PC-9 (cell line): ENCODE measurements at regions of chr3 and their contacts with region 1.

Region 1: DNA sequence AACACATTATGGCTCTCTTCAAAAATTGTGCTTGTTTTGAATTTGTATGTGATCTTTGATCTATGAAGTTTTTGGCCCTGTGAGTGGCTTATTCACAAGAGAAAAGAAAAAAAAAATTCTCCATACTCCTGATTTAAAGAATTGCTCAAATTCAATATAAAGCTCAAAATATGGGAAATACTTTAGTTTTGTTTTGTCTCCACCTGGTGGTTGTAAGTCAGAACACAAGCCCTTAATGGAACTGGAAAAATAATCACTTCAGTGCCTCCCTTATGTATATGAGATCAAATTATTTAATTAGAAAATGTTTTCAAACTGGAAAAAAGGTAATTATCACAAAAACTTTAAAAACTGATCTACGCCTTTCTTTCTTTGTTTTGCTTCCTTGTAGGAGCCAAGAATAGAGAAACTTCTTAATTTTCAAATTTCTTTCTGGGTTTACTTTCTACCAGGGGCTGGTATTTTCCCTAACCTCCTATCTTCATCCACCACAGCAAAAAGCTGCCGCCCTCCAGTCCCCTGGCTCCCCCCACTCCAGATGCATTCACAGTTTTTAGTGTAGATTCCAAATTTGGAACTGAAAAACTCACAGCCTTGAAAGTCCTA is 50.6 kb downstream of the SERP1 start:
- DNase-seq: no peak
- H3K4me3 ChIP-seq: no peak overlapping the region
- H3K27ac ChIP-seq: no peak overlapping the region
- H3K4me1 ChIP-seq: peaks cover 28% of the 10 kb centered on the region
- H3K27me3 ChIP-seq: no peaks in the 10 kb centered on the region
- CTCF ChIP-seq: peak; percentile 82

Region 2: GRCh38 chr3:149771652-149772271 is 723.9 kb before region 1 on chr3:
- CTCF ChIA-PET with region 1: no interaction called
- POLR2A ChIA-PET with region 1: interaction called, 11 read pairs
- intact Hi-C with region 1: no loop called
- DNase-seq: peak in 1 of 2 experiments; percentile 43
- H3K4me3 ChIP-seq: no peak overlapping the region
- H3K27ac ChIP-seq: no peak overlapping the region
- H3K4me1 ChIP-seq: no peaks in the 10 kb centered on the region
- H3K27me3 ChIP-seq: no peaks in the 10 kb centered on the region
- CTCF ChIP-seq: peak; percentile 85

Region 3: GRCh38 chr3:150227839-150228238 is 267.8 kb before region 1 on chr3:
- CTCF ChIA-PET with region 1: interaction called, 5 read pairs
- POLR2A ChIA-PET with region 1: no interaction called
- intact Hi-C with region 1: loop called (anchors 1 kb)
- DNase-seq: peak in 1 of 2 experiments; percentile 65
- H3K4me3 ChIP-seq: no peak overlapping the region
- H3K27ac ChIP-seq: no peak overlapping the region
- H3K4me1 ChIP-seq: no peaks in the 10 kb centered on the region
- H3K27me3 ChIP-seq: no peaks in the 10 kb centered on the region
- CTCF ChIP-seq: peak; percentile 82

Region 4: DNA sequence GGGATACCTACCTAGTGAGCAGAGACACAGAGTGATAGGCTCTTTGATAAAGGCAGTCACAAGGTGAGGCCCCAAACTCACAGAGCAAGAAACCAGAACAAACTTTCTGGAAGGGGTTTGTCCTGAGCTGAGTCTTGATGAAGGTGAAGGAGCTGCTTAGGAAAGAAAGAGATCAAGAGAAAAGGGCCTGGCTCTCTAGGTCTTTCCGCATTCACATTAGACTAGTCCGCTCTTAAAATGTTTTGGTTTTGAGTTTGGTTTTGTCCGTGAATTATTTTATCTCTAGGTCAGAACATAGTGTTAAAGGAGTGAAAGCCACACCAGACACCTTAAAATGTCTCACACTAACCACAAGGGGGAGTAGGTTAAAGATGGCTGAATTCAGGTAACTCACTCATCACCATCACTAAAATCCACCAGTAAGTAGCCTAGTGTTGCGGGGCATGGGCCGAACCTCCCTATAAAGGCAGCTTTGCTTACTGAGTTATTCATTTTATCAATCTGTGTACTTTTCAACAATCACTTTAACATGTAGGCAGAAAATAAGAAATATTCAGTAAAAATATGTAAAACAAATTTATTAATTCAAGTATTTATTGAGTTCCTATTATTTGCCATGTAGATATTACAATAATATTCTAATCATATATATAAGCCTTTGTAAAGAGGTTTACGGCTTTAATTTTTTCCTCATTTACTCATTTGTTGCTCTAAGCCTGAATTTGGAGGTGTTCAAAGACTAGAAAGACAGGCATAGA is 209.1 kb before region 1 on chr3:
- CTCF ChIA-PET with region 1: no interaction called
- POLR2A ChIA-PET with region 1: no interaction called
- intact Hi-C with region 1: loop called (anchors 2 kb)
- DNase-seq: peak; percentile 25 to 42
- H3K4me3 ChIP-seq: no peak overlapping the region
- H3K27ac ChIP-seq: peak overlapping the region; percentile 4; the same call in 1 of the 2 replicates
- H3K4me1 ChIP-seq: peaks cover 11% of the 10 kb centered on the region; the same call in 1 of the 2 replicates
- H3K27me3 ChIP-seq: no peaks in the 10 kb centered on the region
- CTCF ChIP-seq: peak; percentile 79

Region 5: DNA sequence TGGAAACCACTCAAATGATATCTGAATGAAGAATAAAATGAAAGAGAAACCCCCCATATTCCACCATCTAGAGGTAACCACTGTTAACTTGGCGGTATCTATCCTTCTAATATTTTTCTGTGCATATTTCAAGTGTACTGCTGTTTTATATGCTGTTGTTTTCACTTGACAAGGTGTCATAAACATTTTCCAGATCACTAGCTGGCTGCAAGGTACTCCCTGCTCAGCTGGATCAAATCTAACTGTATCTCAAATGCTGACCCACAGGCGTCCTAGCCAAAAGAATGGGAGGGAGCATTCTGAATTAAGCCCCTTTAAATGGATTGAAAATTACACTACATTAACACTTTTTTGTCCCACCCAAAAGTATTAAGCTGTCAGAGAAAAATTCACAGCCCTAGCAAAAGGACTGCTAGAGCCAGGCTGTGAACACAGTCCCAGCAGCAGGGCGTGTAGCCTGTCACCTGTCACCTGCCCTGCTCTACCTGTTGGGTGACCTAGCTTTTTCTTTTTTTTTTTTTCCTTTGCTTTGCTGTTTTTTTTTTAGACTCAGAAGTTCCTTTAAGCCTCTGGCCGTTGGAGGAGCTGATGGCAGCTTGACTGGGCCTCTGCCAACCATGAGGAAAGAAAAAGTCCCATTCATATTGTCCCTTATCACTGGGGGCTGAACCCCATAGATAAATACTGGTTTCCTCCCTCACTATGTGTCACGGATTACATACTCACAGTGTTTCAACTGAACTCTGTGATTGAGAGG is 181.2 kb before region 1 on chr3:
- CTCF ChIA-PET with region 1: no interaction called
- POLR2A ChIA-PET with region 1: no interaction called
- intact Hi-C with region 1: loop called (anchors 2 kb)
- DNase-seq: peak; percentile 75 to 92
- H3K4me3 ChIP-seq: no peak overlapping the region
- H3K27ac ChIP-seq: peak overlapping the region; percentile 36
- H3K4me1 ChIP-seq: peaks cover 60% of the 10 kb centered on the region
- H3K27me3 ChIP-seq: no peaks in the 10 kb centered on the region
- CTCF ChIP-seq: no peak

Region 6: GRCh38 chr3:150371741-150372254 is 123.9 kb before region 1 on chr3:
- CTCF ChIA-PET with region 1: no interaction called
- POLR2A ChIA-PET with region 1: no interaction called
- intact Hi-C with region 1: loop called (anchors 1 kb)
- DNase-seq: peak; percentile 77 to 99
- H3K4me3 ChIP-seq: peak overlapping the region; percentile 53; the same call in 1 of the 2 replicates
- H3K27ac ChIP-seq: peak overlapping the region; percentile 92
- H3K4me1 ChIP-seq: peaks cover 63% of the 10 kb centered on the region
- H3K27me3 ChIP-seq: no peaks in the 10 kb centered on the region
- CTCF ChIP-seq: no peak